Endothelial cell of umbilical vein (primary cell): ENCODE measurements at regions of chr17 and their contacts with region 1.

Region 1: GRCh38 chr17:37239690-37240334 is 136.0 kb upstream of the C17orf78 start:
- DNase-seq: peak; percentile 62
- H3K4me3 ChIP-seq: no peak overlapping the region
- H3K27ac ChIP-seq: no peak overlapping the region
- H3K4me1 ChIP-seq: no peaks in the 10 kb centered on the region
- H3K27me3 ChIP-seq: no peaks in the 10 kb centered on the region
- CTCF ChIP-seq: peak; percentile 46 to 52
- POLR2A ChIP-seq: no peak

Region 2: DNA sequence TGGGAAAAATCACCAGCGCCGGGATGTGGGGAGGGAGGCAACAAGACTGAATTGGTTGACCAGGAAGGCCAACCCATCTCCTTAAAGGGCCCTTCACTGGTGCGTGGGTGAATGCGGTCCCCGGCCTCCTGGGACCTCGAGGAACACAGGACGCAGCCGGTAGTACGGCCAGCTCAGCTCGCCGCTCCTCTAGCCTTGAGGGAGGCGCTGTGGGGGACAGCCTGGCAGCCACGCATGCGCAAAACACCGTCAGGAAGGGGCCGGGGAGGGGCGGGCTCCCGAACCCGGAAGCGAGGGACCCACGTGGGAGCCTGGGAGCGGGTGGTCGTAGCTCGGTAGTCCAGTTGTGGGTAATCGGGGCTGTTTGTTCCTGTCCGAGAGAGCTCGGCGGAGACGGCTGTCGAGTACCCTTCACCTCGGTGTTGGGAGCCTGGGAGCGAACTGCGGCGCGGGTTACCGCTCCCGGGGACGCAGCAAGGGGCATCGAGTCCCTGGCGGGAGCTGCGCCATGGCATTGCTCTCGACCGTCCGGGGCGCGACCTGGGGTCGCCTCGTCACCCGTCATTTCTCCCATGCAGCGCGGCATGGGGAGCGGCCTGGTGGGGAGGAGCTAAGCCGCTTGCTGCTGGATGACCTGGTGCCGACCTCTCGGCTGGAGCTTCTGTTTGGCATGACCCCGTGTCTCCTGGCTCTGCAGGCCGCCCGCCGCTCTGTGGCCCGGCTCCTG is 638.3 kb before region 1 on chr17 and contains the start of gene MRM1:
- CTCF ChIA-PET with region 1: interaction called, 66 read pairs
- POLR2A ChIA-PET with region 1: no interaction called
- dilution Hi-C with region 1: no loop called
- intact Hi-C with region 1: no loop called
- DNase-seq: peak; percentile 93
- H3K4me3 ChIP-seq: peak within 1 kb of the TSS; percentile 34 to 67 (median 63)
- H3K27ac ChIP-seq: peak within 1 kb of the TSS; percentile 54
- H3K4me1 ChIP-seq: peaks cover 16% of the 10 kb centered on the region
- H3K27me3 ChIP-seq: no peaks in the 10 kb centered on the region
- CTCF ChIP-seq: peak in 1 of 2 donors; percentile 27
- POLR2A ChIP-seq: peak; percentile 98
- total RNA-seq, gene MRM1: 5.2 and 5.9 TPM in 2 replicates

Region 3: GRCh38 chr17:36827081-36827480 is 412.7 kb before region 1 on chr17:
- CTCF ChIA-PET with region 1: no interaction called
- POLR2A ChIA-PET with region 1: no interaction called
- dilution Hi-C with region 1: no loop called
- intact Hi-C with region 1: no loop called
- DNase-seq: no peak
- H3K4me3 ChIP-seq: no peak overlapping the region
- H3K27ac ChIP-seq: no peak overlapping the region
- H3K4me1 ChIP-seq: no peaks in the 10 kb centered on the region
- H3K27me3 ChIP-seq: peaks cover 12 to 25% of the 10 kb centered on the region in 2 experiments
- CTCF ChIP-seq: no peak
- POLR2A ChIP-seq: no peak

Region 4: DNA sequence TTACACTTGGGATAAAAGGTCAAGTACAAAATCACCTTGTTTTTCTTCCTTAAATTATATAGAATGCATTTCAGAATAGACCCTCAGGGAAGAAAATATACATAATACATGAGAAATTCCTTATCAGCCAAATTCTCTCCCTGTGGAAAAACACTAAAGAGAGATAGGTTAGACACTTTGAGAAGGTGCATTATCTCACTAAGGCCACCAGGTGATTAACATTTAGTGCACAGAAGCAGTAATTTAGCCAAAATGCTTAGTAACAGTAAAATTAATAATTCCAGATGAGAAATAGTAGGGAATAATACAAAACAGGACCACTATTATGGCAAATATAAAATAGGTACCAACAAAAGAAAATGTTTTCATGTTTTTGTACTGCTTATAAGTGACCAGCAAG is 49.3 kb before region 1 on chr17:
- CTCF ChIA-PET with region 1: interaction called, 10 read pairs
- POLR2A ChIA-PET with region 1: no interaction called
- dilution Hi-C with region 1: no loop called
- intact Hi-C with region 1: no loop called
- DNase-seq: no peak
- H3K4me3 ChIP-seq: no peak overlapping the region
- H3K27ac ChIP-seq: no peak overlapping the region
- H3K4me1 ChIP-seq: peaks cover 8% of the 10 kb centered on the region
- H3K27me3 ChIP-seq: no peaks in the 10 kb centered on the region
- CTCF ChIP-seq: no peak
- POLR2A ChIP-seq: no peak

Region 5: DNA sequence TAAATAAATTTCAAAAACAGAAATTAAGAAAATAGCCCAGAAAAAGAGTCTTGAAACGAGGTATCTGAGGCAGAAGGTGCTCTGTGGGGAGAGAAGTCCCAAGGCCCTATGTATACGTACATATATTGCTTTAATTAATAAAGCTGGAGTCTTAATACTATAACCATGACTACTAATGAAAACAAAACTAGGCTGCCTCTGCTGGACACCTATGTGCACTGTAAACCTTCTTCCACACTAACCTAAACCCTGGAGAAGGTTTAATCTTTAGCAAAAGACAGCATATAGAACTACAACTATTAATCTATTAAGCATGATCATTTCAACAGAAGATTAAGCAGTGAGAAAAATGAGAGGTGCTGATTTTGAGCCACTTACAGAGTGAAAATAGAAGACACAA is 17.9 kb before region 1 on chr17:
- CTCF ChIA-PET with region 1: interaction called, 11 read pairs
- POLR2A ChIA-PET with region 1: no interaction called
- dilution Hi-C with region 1: no loop called
- intact Hi-C with region 1: no loop called
- DNase-seq: no peak
- H3K4me3 ChIP-seq: no peak overlapping the region
- H3K27ac ChIP-seq: no peak overlapping the region
- H3K4me1 ChIP-seq: no peaks in the 10 kb centered on the region
- H3K27me3 ChIP-seq: no peaks in the 10 kb centered on the region
- CTCF ChIP-seq: no peak
- POLR2A ChIP-seq: no peak

Region 6: DNA sequence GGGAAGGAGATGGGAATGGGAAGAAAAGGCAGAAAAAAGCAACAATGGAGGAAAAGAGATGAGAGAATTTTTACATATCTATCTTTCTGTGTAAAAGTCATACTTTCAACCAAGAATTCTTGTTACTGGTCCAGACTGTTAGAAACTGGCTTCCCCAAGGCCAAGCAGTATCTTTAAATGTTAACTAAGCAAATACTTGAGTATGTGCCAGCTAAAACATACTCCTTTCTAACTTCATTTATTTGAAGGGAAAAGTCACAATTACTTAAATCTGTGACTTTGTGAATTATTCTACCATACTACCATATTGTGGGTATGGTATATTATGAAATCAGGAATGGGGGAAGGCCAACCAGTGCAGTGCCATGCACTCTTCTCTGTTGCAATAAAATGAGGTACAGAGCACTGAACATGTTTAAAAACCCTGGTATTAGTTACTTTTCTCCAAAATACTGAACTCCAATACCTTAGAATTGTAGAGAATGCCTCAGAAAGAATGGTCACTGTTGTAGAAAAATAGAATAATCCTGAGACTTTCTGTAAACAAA is 43.7 kb after region 1 on chr17:
- CTCF ChIA-PET with region 1: interaction called, 4 read pairs
- POLR2A ChIA-PET with region 1: no interaction called
- dilution Hi-C with region 1: no loop called
- intact Hi-C with region 1: loop called (anchors 5 kb)
- DNase-seq: no peak
- H3K4me3 ChIP-seq: no peak overlapping the region
- H3K27ac ChIP-seq: no peak overlapping the region
- H3K4me1 ChIP-seq: peaks cover 8% of the 10 kb centered on the region
- H3K27me3 ChIP-seq: no peaks in the 10 kb centered on the region
- CTCF ChIP-seq: no peak
- POLR2A ChIP-seq: no peak

Region 7: GRCh38 chr17:37770631-37771518 is 531.1 kb after region 1 on chr17:
- CTCF ChIA-PET with region 1: no interaction called
- POLR2A ChIA-PET with region 1: no interaction called
- dilution Hi-C with region 1: no loop called
- intact Hi-C with region 1: no loop called
- DNase-seq: peak; percentile 61
- H3K4me3 ChIP-seq: no peak overlapping the region
- H3K27ac ChIP-seq: no peak overlapping the region
- H3K4me1 ChIP-seq: no peaks in the 10 kb centered on the region
- H3K27me3 ChIP-seq: no peaks in the 10 kb centered on the region
- CTCF ChIP-seq: peak; percentile 73 to 80
- POLR2A ChIP-seq: no peak